ENCODE measurements at regions of chr13 and their contacts with region 1.

Region 1: GRCh38 chr13:23386533-23386932 is 47.0 kb downstream of the SACS start:
- DNase-seq: peak; percentile 39
- H3K4me3 Mint-ChIP-seq: no peak overlapping the region
- H3K27ac Mint-ChIP-seq: peak overlapping the region; percentile 20
- H3K4me1 Mint-ChIP-seq: peaks cover 40% of the 10 kb centered on the region
- H3K27me3 Mint-ChIP-seq: peaks cover 3% of the 10 kb centered on the region

Region 2: DNA sequence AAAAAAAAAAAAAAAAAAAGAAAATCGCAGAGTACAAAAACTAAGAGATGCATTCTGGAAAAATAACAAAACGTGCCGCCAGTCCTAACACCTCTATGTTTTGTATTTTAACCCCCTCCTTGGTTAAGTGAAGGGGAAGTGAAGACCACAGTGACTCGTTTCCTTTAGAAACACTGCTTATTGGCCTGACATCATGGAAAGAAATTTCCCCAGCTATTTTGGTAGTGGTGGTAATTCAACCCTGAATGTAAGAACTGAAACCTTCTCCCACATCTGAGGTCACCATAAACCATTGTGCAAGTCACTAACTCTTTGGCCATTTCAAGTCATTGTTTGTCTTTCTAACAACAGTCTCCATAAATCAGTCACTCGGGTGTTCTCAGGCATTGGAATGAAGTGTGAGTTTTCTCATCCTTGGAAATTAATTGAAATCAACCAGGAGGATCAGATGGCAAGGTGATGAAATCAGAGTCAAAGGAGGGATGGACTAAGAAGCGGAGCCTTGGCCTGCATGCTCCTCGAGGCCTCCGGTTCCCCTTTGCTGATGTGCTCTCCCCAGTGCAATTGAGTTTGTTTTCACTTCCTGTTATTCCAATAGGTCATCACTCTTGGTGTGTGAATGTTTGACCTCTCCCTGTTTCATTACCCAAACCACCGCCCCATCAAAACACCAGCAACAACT is 1271.8 kb before region 1 on chr13:
- CTCF ChIA-PET with region 1: no interaction called
- intact Hi-C with region 1: loop called (anchors 1 kb)
- DNase-seq: peak; percentile 30
- H3K4me3 Mint-ChIP-seq: no peak overlapping the region
- H3K27ac Mint-ChIP-seq: peak overlapping the region; percentile 47
- H3K4me1 Mint-ChIP-seq: peaks cover 25% of the 10 kb centered on the region
- H3K27me3 Mint-ChIP-seq: no peaks in the 10 kb centered on the region

Region 3: GRCh38 chr13:23129331-23129730 is 257.2 kb before region 1 on chr13:
- CTCF ChIA-PET with region 1: no interaction called
- intact Hi-C with region 1: no loop called
- DNase-seq: no peak
- H3K4me3 Mint-ChIP-seq: no peak overlapping the region
- H3K27ac Mint-ChIP-seq: no peak overlapping the region
- H3K4me1 Mint-ChIP-seq: no peaks in the 10 kb centered on the region
- H3K27me3 Mint-ChIP-seq: no peaks in the 10 kb centered on the region

Region 4: DNA sequence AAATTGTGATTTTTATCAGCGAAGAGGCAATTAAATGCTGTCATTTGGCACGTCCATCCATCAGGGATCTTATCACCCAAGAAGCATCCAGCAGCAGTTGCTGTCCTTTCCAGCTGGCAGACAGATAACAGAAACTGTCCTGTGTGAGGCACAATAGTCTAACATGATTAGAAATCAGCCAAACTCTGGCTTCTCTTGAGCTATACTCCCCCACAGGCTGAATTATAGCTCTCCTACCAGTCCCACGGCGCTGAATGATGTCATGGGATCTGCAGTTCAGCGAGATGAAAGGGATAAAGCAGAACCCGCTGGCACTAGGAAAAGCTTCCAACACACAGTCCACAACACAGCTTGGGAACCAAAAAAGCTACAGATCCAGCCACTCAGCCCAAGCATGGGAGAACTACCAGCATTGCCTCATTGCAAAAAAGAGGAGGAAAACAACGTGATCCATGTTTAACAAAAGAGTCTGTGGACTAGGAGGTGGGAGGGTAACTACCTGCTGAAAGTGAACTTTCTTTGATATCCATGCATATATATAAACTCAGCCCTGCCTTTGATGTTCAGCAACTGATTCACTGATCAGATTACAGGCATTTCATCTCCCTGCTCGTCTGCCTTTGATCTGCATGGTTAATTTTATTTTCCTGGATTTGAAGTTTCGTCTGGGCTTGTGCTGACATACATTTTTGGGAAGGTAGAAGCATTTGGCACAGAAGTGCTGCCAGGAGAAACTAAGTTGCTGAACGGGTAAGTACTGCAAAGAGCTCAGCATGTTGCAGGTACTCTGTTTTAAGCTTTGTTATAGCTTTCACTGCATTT is 183.8 kb after region 1 on chr13 and contains the start of gene TNFRSF19:
- CTCF ChIA-PET with region 1: no interaction called
- intact Hi-C with region 1: no loop called
- DNase-seq: no peak
- H3K4me3 Mint-ChIP-seq: no peak within 1 kb of the TSS
- H3K27ac Mint-ChIP-seq: no peak within 1 kb of the TSS
- H3K4me1 Mint-ChIP-seq: peaks cover 9% of the 10 kb centered on the region
- H3K27me3 Mint-ChIP-seq: peaks cover 26% of the 10 kb centered on the region
- total RNA-seq, gene TNFRSF19: not detected

Region 5: DNA sequence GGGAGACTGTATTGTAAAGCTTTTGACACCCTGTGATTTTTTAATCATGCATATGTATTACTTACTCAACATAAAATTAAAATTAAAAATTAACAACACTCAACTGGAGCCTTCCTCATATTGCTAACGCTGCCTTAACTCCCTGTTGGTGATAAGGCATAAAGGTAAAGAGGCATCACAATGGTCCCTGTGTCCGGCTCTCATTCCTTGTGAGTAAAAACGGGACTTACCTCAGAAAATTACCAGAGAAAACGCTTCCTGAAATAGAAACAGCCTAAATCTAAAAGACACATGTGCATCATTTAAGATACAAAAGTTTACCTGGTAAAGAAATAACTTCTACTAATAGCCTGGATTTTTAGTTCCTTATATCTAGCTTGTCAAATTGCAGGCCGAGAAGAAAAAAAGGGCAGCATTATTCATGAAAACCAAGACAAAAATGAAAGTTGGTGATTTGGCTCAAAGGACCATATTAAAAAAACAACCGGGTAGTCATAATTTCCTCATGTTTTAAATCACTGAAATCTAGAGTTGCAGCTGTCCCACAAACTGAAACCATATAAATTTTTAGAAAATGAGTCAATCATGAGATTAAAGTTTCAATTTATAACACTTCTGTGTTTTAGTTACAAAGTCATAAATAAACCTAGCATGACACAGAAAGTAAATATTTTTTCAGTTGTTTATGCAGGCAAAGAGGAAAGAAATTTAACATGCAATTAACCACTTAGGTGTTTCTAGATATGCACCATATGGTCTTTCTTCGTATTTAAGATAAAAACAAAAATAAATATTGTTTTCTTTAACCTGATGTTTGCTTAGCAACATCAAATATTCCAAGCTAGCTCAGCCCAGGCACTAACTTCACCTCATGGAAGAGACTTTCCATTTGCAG is 408.0 kb after region 1 on chr13:
- CTCF ChIA-PET with region 1: no interaction called
- intact Hi-C with region 1: loop called (anchors 1 kb)
- DNase-seq: no peak
- H3K4me3 Mint-ChIP-seq: no peak overlapping the region
- H3K27ac Mint-ChIP-seq: no peak overlapping the region
- H3K4me1 Mint-ChIP-seq: peaks cover 10% of the 10 kb centered on the region
- H3K27me3 Mint-ChIP-seq: no peaks in the 10 kb centered on the region

Region 6: GRCh38 chr13:23960566-23961156 is 574.1 kb after region 1 on chr13:
- CTCF ChIA-PET with region 1: no interaction called
- intact Hi-C with region 1: loop called (anchors 5 kb)
- DNase-seq: peak; percentile 40
- H3K4me3 Mint-ChIP-seq: no peak overlapping the region
- H3K27ac Mint-ChIP-seq: no peak overlapping the region
- H3K4me1 Mint-ChIP-seq: peaks cover 16% of the 10 kb centered on the region
- H3K27me3 Mint-ChIP-seq: no peaks in the 10 kb centered on the region

Region 7: DNA sequence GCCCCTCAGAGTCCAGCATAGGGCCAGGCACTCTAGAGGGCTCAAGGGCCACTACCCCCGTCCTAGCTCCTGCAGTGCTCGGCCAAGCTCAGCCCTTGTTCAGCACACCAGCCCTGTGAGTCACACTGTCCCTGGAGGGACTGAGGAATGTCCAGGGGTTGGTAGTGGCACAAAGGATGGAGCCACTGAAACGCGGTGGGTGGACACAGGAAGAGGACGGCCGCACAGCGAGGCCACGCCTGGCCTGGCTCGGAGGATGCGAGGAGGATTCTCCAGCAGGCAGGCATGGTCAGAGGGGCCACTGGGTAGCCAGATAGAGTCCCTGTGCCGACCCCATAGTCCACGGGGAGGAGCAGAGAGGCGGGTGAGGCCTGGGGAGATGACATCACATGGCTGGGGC is 968.6 kb after region 1 on chr13:
- CTCF ChIA-PET with region 1: no interaction called
- intact Hi-C with region 1: no loop called
- DNase-seq: no peak
- H3K4me3 Mint-ChIP-seq: no peak overlapping the region
- H3K27ac Mint-ChIP-seq: no peak overlapping the region
- H3K4me1 Mint-ChIP-seq: no peaks in the 10 kb centered on the region
- H3K27me3 Mint-ChIP-seq: no peaks in the 10 kb centered on the region

Measured in activated naive CD4-positive, alpha-beta T cell treated with anti-CD3 and anti-CD28 coated beads for 36 hours (primary cell).